ENCODE measurements at regions of chr6 and their contacts with region 1.

Region 1: GRCh38 chr6:52419809-52420670 is at the start of gene EFHC1:
- DNase-seq: peak; percentile 98
- H3K4me3 Mint-ChIP-seq: no peak within 1 kb of the TSS
- H3K27ac Mint-ChIP-seq: no peak within 1 kb of the TSS
- H3K4me1 Mint-ChIP-seq: peaks cover 14% of the 10 kb centered on the region
- H3K27me3 Mint-ChIP-seq: peaks cover 6% of the 10 kb centered on the region
- total RNA-seq, gene EFHC1: 0.70 and 1.3 TPM in 2 replicates

Region 2: GRCh38 chr6:52399511-52400312 is 20.3 kb before region 1 on chr6:
- intact Hi-C with region 1: loop called (anchors 1 kb)
- DNase-seq: no peak
- H3K4me3 Mint-ChIP-seq: peak overlapping the region; percentile 42
- H3K27ac Mint-ChIP-seq: peak overlapping the region; percentile 38
- H3K4me1 Mint-ChIP-seq: peaks cover 52% of the 10 kb centered on the region
- H3K27me3 Mint-ChIP-seq: peaks cover 5% of the 10 kb centered on the region

Region 3: GRCh38 chr6:52537001-52537753 is 117.1 kb after region 1 on chr6:
- intact Hi-C with region 1: loop called (anchors 2 kb)
- DNase-seq: no peak
- H3K4me3 Mint-ChIP-seq: peak overlapping the region; percentile 19
- H3K27ac Mint-ChIP-seq: peak overlapping the region; percentile 56
- H3K4me1 Mint-ChIP-seq: peaks cover 38% of the 10 kb centered on the region
- H3K27me3 Mint-ChIP-seq: no peaks in the 10 kb centered on the region

Region 4: DNA sequence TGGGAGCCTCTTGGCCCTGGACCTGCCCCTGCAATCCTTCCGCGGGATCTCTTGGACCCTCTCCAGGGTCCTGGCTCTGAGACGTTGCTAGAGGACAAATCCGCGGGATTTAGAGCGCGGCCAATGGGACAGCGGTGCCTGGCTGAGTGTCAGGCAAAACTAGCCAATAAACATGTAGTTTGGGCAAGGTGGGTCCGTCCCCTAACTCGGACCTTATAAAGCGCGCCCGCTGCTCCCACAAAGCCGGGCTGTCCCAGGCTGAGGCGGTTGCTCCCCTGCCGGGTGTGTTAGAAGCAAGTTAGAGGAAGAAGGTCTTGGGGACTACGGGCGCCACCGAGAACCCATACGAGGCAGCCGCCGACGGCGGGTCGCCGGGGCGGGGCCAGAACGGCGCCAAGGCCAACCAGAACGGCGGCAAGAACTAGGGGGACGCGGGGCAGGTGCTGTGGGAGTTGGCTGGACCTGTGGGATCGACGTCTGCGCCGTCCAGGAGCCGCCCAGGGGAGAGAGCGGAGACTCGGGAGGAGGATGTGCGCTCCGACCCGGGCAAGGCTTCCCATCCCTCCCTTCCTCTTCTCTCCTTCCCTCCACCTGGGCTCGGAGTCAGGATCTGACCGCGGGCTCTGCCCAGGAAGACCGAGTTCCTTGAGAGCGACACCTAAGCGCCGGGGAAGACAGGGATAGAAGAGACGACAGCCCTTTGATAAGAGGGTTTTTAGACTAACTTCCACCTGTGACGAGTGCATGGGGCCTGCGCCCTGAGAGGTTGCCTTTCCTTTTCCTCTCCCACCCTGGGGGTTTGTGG is 244.3 kb after region 1 on chr6:
- intact Hi-C with region 1: loop called (anchors 1 kb)
- DNase-seq: peak; percentile 68
- H3K4me3 Mint-ChIP-seq: no peak overlapping the region
- H3K27ac Mint-ChIP-seq: no peak overlapping the region
- H3K4me1 Mint-ChIP-seq: peaks cover 10% of the 10 kb centered on the region
- H3K27me3 Mint-ChIP-seq: no peaks in the 10 kb centered on the region

Region 5: GRCh38 chr6:53064726-53065215 is 644.7 kb after region 1 on chr6:
- intact Hi-C with region 1: loop called (anchors 2 kb)
- DNase-seq: peak; percentile 94
- H3K4me3 Mint-ChIP-seq: peak overlapping the region; percentile 99
- H3K27ac Mint-ChIP-seq: peak overlapping the region; percentile 99
- H3K4me1 Mint-ChIP-seq: peaks cover 46% of the 10 kb centered on the region
- H3K27me3 Mint-ChIP-seq: peaks cover 2% of the 10 kb centered on the region

Measured in activated T-helper 1 cell treated with anti-CD3 and anti-CD28 coated beads, Interleukin-12 subunit alpha, Interleukin-12 subunit beta, Interleukin-2, Interleukin-4 antibody, amounts not matched to agents 30 ng/mL and 10 ng/mL and 1 ng/mL, durations not matched to agents 14 hours and 24 hours and 36 hours (primary cell).